BJ (cell line): ENCODE measurements at regions of chr3 and their contacts with region 1.

Region 1: GRCh38 chr3:121545574-121546455 is at the start of gene POLQ:
- DNase-seq: peak; percentile 60
- H3K4me3 ChIP-seq: peak within 1 kb of the TSS; percentile 51
- H3K27me3 ChIP-seq: no peaks in the 10 kb centered on the region
- CTCF ChIP-seq: no peak
- polyA plus RNA-seq, gene POLQ: 1.0 and 2.5 TPM in 2 replicates

Region 2: GRCh38 chr3:122101646-122102045 is 555.8 kb after region 1 on chr3:
- CTCF ChIA-PET with region 1: no interaction called
- POLR2A ChIA-PET with region 1: interaction called, 12 read pairs
- DNase-seq: no peak
- H3K4me3 ChIP-seq: no peak overlapping the region
- H3K27me3 ChIP-seq: no peaks in the 10 kb centered on the region; the same call in 1 of the 2 replicates
- CTCF ChIP-seq: peak; percentile 48

Region 3: GRCh38 chr3:122258757-122259371 is 713.0 kb after region 1 on chr3:
- CTCF ChIA-PET with region 1: interaction called, 10 read pairs
- POLR2A ChIA-PET with region 1: no interaction called
- DNase-seq: no peak
- H3K4me3 ChIP-seq: no peak overlapping the region
- H3K27me3 ChIP-seq: peaks cover 2% of the 10 kb centered on the region; the same call in 1 of the 2 replicates
- CTCF ChIP-seq: peak; percentile 72

Region 4: DNA sequence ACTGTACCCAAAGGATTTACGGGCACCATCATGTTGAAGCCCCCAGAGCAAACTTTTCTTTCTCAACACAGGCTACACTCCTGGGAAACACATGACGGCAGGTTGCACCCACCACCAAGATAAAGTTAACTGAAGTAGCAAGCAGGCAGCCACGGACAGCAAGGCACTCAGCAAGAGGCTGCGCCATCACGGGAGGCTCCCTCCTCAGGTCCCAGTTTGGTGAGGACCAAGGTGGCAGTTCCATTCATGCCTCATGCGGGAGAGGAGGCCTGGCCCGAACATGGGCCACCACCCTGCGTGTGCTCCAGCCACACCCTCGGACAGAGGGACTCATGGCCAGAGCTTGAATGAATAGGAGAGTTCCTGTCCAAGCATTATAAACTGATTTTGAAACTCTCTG is 1896.3 kb after region 1 on chr3:
- CTCF ChIA-PET with region 1: no interaction called
- POLR2A ChIA-PET with region 1: interaction called, 17 read pairs
- DNase-seq: no peak
- H3K4me3 ChIP-seq: no peak overlapping the region
- H3K27me3 ChIP-seq: peaks cover 42% of the 10 kb centered on the region
- CTCF ChIP-seq: no peak